ENCODE measurements at regions of chr17 and their contacts with region 1.

Region 1: GRCh38 chr17:4499431-4500187 is 928 bp downstream of the SPNS2 start:
- DNase-seq: peak in 2 of 6 donors; percentile 43 to 78
- ATAC-seq: peak; percentile 13 to 36 (median 30)
- H3K4me3 ChIP-seq: peak overlapping the region; percentile 14 to 52 (median 36)
- H3K27ac ChIP-seq: peak overlapping the region in 3 of 4 donors; percentile 17 to 68 (median 44)
- H3K4me1 ChIP-seq: peaks cover 0 to 27% (median 7%) of the 10 kb centered on the region in 3 donors
- H3K27me3 ChIP-seq: no peaks in the 10 kb centered on the region
- CTCF ChIP-seq: no peak

Region 2: GRCh38 chr17:4433515-4434031 is 66.0 kb before region 1 on chr17 and contains the start of gene SPNS3:
- intact Hi-C with region 1: loop called in 1 of 3 experiments (anchors 10 kb)
- DNase-seq: no peak
- ATAC-seq: peak in 2 of 4 donors; percentile 18 to 57
- H3K4me3 ChIP-seq: no peak within 1 kb of the TSS
- H3K27ac ChIP-seq: no peak within 1 kb of the TSS
- H3K4me1 ChIP-seq: no peaks in the 10 kb centered on the region
- H3K27me3 ChIP-seq: no peaks in the 10 kb centered on the region
- CTCF ChIP-seq: no peak
- total RNA-seq, gene SPNS3: 0.08 to 0.89 (median 0.44) TPM

Measured in pancreas (tissue), 10 donors.